Activated CD4-positive, alpha-beta T cell treated with anti-CD3 and anti-CD28 coated beads for 36 hours (primary cell): ENCODE measurements at regions of chr17 and their contacts with region 1.

Region 1: DNA sequence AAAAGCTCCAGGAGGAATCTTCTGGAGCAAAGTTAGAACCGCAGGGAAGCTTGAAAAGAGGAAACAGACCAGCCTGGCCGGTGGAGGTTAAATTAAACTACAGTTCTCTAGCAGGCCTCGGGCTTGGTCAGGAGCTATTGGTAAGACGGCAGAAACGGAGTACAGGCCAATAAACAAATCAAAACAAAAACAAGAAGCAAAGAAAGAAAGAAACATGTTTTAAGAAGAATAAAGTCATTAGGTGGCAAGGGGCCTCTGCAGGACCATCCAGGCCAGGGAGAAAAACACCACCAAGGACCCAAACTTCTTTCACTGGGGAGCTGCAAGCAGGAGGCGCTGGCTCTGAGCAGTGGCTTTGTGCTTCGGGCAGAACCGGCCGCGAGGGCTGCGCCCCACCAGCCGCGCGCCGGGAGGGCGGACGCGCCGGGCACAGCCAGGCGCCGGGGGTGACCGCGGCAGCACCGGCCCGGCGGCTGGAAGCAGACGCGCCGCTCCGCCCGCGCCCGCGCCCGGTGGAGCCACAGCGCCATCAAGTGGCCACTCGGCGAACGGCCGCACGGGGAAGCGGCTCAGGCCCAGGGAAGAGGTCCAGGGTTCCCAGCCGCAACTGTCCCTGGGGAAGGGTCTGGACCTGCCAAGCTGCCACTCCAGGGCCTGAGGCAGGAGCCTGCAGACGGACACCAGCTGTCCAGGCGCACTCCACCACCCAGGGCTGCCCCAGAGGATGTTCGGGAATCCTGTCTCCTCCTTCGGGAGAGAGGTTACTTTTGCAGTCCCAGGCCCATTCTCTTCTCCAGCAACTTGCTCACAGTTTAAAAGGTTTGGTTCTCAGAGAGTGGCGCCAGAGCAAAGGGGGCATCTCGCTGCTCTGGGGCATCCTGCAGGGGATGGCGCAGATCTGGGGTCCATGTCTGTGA is 419.4 kb downstream of the SOX9 start:
- DNase-seq: peak; percentile 78
- ATAC-seq: peak; percentile 74
- H3K4me3 Mint-ChIP-seq: no peak overlapping the region
- H3K27ac Mint-ChIP-seq: no peak overlapping the region
- H3K4me1 Mint-ChIP-seq: peaks cover 5% of the 10 kb centered on the region
- H3K27me3 Mint-ChIP-seq: peaks cover 26% of the 10 kb centered on the region

Region 2: GRCh38 chr17:70636517-70637133 is 1903.6 kb before region 1 on chr17:
- CTCF ChIA-PET with region 1: no interaction called
- POLR2A ChIA-PET with region 1: no interaction called
- intact Hi-C with region 1: loop called (anchors 1 to 2 kb)
- DNase-seq: peak; percentile 5
- ATAC-seq: no peak
- H3K4me3 Mint-ChIP-seq: no peak overlapping the region
- H3K27ac Mint-ChIP-seq: no peak overlapping the region
- H3K4me1 Mint-ChIP-seq: no peaks in the 10 kb centered on the region
- H3K27me3 Mint-ChIP-seq: peaks cover 2% of the 10 kb centered on the region

Region 3: DNA sequence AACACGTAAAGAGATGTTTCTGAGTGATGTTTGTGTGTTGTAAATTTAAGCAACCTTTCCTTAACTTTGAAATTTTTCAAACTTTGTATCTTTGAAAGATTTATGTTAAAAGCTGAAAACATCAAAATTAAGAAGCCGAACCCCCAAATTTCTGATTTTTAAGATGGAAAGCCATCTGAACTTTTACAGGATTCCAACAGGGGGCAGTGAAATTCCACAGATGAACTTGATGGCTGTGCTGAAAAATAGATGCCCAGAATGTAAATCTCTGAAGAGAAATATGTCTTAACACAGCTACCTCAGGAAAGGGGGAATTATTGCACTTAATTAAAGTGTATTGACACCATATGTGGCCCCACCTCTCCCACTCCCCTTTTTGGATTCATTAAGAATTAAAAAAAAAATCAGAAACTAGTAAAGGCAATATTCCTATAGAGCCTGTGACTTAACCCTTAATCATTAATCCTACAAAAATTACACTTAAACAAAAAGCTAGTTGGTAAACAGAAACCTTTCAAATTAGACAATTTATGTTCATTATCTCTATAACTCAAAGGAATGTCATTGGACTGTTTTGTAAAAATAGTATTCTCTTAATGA is 1773.0 kb before region 1 on chr17:
- CTCF ChIA-PET with region 1: interaction called, 5 read pairs
- POLR2A ChIA-PET with region 1: no interaction called
- intact Hi-C with region 1: loop called (anchors 1 to 5 kb)
- DNase-seq: peak; percentile 4
- ATAC-seq: no peak
- H3K4me3 Mint-ChIP-seq: no peak overlapping the region
- H3K27ac Mint-ChIP-seq: no peak overlapping the region
- H3K4me1 Mint-ChIP-seq: no peaks in the 10 kb centered on the region
- H3K27me3 Mint-ChIP-seq: no peaks in the 10 kb centered on the region

Region 4: DNA sequence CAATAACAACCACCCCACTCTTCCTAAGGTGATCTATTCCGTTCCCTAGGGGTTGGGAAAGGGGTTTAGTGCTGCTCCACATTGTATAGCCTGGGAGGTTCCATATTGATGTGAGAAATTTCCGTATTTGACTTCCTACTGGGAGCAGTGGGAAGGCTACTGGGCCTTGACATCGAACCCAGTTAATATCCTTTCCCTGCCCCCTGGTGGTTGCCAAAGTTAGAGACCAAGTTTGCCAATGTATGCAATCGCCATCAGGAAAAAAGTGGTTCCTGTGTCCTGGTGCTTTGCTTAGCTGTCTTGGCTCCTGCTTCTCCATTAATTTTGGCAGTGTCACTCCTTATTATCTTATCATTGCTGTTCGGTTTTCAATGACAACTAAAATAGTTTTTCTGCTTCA is 1456.0 kb before region 1 on chr17:
- CTCF ChIA-PET with region 1: no interaction called
- POLR2A ChIA-PET with region 1: no interaction called
- intact Hi-C with region 1: loop called in 1 of 2 experiments (anchors 5 kb)
- DNase-seq: no peak
- ATAC-seq: no peak
- H3K4me3 Mint-ChIP-seq: no peak overlapping the region
- H3K27ac Mint-ChIP-seq: no peak overlapping the region
- H3K4me1 Mint-ChIP-seq: no peaks in the 10 kb centered on the region
- H3K27me3 Mint-ChIP-seq: no peaks in the 10 kb centered on the region

Region 5: DNA sequence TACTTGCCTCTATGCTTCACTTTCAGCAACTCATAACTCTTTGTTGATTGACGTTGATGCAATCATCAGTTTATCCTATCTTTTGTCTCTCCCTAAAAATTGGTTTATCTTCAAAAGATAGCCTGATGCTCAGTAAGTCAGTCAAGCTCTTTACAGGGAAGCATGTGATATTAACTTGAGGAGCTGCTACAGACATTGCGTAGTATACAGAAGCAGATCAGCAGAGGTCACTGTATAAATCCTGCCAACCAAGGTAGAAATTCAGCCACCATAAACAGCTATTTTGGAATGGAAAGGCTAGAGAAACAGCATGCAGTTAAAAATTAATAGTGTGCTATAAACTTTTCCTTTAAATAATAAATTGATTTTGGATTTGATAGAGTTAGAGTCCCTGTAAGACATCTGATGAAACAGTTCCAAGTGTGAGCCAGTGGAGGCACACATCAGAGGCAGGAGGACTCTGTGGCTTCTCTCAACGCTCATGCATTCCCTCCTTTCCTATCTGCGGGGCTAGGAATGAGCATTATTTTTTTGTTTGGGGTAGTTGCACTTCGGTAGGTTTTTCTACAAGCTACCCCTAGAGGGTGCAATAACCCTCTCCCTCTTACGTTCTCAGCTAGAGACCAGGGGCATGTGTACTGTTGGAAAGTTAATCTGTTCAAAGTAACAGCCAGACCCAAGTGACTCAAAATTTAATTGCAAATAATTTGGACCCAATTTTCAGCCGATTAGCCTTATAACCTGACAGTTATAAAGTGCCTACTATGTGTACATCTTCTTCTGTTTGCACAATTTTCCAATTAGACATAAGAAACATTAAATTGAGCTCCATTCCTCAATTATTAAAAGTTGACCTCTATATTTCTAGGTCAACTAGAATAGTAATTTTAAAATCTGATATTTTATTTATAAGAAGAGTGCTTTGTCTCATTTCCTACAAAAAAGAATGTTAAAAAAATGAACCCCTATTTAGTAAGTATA is 1067.1 kb before region 1 on chr17:
- CTCF ChIA-PET with region 1: no interaction called
- POLR2A ChIA-PET with region 1: no interaction called
- intact Hi-C with region 1: loop called (anchors 1 to 10 kb)
- DNase-seq: no peak
- ATAC-seq: no peak
- H3K4me3 Mint-ChIP-seq: no peak overlapping the region
- H3K27ac Mint-ChIP-seq: no peak overlapping the region
- H3K4me1 Mint-ChIP-seq: no peaks in the 10 kb centered on the region
- H3K27me3 Mint-ChIP-seq: no peaks in the 10 kb centered on the region

Region 6: GRCh38 chr17:72120642-72121163 is 419.5 kb before region 1 on chr17 and contains the start of gene SOX9:
- CTCF ChIA-PET with region 1: no interaction called
- POLR2A ChIA-PET with region 1: no interaction called
- intact Hi-C with region 1: loop called in 1 of 2 experiments (anchors 5 kb)
- DNase-seq: no peak
- ATAC-seq: no peak
- H3K4me3 Mint-ChIP-seq: peak within 1 kb of the TSS; percentile 35
- H3K27ac Mint-ChIP-seq: no peak within 1 kb of the TSS
- H3K4me1 Mint-ChIP-seq: peaks cover 14% of the 10 kb centered on the region
- H3K27me3 Mint-ChIP-seq: peaks cover 68% of the 10 kb centered on the region
- total RNA-seq, gene SOX9: not detected